IMR-90 (cell line): ENCODE measurements at regions of chrX and their contacts with region 1.

Region 1: DNA sequence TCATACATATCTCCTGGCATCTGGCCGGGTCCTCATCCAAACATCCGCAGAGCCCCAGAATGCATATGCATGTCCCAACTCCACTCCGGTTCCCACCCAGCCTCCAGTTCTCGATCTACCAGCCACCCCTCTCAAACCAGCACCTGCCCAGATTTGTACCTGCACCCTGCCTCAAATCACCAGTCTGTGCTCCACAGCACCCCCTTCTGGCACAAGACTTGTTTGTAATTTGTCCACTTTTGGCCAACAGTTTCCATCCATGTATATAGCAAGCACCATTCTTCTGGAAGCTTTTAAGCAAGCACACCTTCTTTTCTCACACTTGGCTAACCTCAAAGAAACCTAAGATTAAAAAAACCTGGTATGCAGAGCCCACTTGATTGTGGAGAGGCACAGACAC is 644.1 kb downstream of the MID1IP1 start:
- DNase-seq: no peak
- ATAC-seq: no peak
- H3K4me3 ChIP-seq: no peak overlapping the region
- H3K27ac ChIP-seq: no peak overlapping the region
- H3K4me1 ChIP-seq: no peaks in the 10 kb centered on the region
- H3K27me3 ChIP-seq: peaks cover 8% of the 10 kb centered on the region
- CTCF ChIP-seq: no peak
- POLR2A ChIP-seq: no peak
- RAD21 ChIP-seq: no peak

Region 2: GRCh38 chrX:38664285-38664684 is 781.1 kb before region 1 on chrX:
- CTCF ChIA-PET with region 1: no interaction called
- POLR2A ChIA-PET with region 1: no interaction called
- dilution Hi-C with region 1: no loop called
- in situ Hi-C with region 1: no loop called
- intact Hi-C with region 1: loop called (anchors 5 kb)
- DNase-seq: peak; percentile 43
- ATAC-seq: peak; percentile 72
- H3K4me3 ChIP-seq: no peak overlapping the region
- H3K27ac ChIP-seq: no peak overlapping the region
- H3K4me1 ChIP-seq: no peaks in the 10 kb centered on the region
- H3K27me3 ChIP-seq: peaks cover 4% of the 10 kb centered on the region
- CTCF ChIP-seq: peak; percentile 50
- POLR2A ChIP-seq: no peak
- RAD21 ChIP-seq: peak; percentile 52

Region 3: DNA sequence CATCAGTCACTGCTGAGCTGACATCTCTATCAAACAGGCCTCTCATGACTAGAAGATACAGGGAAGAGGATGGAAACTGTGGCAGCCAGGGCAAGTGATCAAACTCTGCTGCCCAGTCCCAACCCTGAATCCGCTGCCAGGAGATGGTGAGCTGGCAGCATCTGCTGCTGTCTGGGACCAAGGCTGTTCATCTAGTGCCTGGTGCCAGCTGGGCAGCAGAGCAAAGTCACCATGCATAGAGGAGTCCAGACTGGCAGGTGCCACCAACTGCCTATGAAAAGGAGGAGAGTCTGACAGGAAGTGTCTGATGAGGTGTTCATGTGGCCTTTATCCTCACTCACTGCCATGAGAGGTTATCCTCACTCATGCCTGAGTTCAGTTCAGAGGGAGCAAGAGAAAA is 125.2 kb before region 1 on chrX:
- CTCF ChIA-PET with region 1: no interaction called
- POLR2A ChIA-PET with region 1: no interaction called
- dilution Hi-C with region 1: no loop called
- in situ Hi-C with region 1: no loop called
- intact Hi-C with region 1: no loop called
- DNase-seq: no peak
- ATAC-seq: no peak
- H3K4me3 ChIP-seq: no peak overlapping the region
- H3K27ac ChIP-seq: no peak overlapping the region
- H3K4me1 ChIP-seq: no peaks in the 10 kb centered on the region
- H3K27me3 ChIP-seq: peaks cover 9% of the 10 kb centered on the region
- CTCF ChIP-seq: no peak
- POLR2A ChIP-seq: no peak
- RAD21 ChIP-seq: no peak